ENCODE measurements at regions of chr6 and their contacts with region 1.

Region 1: DNA sequence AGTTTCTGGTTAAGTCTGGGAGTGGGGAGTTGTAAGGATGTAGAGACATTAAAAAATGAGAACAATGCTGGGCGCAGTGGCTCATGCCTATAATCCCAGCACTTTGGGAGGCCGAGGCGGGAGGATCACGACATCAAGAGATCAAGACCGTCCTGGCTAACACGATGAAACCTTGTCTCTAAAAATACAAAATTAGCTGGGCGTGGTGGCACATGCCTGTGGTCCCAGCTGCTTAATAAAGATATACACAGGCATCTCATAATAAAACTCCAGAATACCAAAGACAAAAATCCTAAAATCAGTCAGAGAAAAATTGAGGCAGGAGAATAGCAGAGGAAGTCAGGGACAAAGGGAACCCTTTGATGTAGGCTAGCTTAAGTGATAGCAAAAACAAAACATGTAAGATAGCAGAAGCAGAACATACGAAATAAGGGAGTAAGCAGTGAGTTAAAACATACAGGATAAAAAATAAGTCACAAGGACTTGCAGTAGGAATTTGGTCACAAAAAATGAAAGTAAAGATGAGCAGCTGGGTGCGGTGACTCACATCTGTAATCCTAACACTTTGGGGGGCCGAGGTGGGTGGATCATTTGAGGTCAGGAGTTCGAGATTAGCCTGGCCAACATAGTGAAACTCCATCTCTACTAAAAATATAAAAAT is 23.6 kb downstream of the DDX43 start:
- DNase-seq: no peak
- ATAC-seq: no peak
- H3K4me3 ChIP-seq: no peak overlapping the region
- H3K4me3 Mint-ChIP-seq: peak overlapping the region; percentile 43
- H3K27ac ChIP-seq: no peak overlapping the region
- H3K27ac Mint-ChIP-seq: peak overlapping the region; percentile 72 to 82
- H3K4me1 ChIP-seq: peaks cover 20% of the 10 kb centered on the region
- H3K4me1 Mint-ChIP-seq: peaks cover 24% of the 10 kb centered on the region in 2 donors
- H3K27me3 ChIP-seq: no peaks in the 10 kb centered on the region
- H3K27me3 Mint-ChIP-seq: no peaks in the 10 kb centered on the region
- CTCF ChIP-seq: no peak

Region 2: DNA sequence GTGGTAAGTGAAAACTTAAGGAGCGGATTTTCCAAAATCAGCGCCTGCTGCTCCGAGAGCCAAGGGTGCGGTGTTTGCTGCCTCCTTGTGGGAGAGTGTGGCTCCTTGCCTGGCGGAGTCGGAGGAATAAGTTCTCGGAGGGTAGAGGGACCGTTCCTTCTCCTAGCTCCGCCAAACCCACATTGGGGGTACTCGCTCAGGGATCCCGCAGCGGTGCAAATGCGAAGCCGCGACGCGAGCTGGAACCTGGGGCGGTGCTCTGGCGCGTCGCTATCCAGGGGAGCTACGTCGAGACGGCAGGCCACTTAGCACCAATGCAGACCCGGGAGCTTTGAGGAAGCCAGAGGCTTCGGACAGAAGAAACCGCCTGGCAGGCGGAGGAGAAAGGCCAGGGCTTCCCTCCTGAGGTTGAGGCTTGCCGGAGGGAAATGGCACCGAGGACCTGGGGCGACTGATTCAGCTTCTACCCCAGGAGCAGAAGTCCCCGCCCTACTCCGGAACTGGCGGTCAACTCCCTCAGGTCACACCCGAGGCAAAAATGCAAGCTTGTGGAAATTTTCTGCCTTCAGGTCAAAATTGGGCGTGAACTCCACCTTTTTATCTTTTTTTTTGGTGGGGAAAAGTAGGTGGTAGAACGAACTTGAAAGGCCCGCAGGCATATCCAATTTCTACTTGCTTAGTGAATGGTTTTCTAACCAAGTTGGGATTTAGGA is 29.3 kb before region 1 on chr6:
- intact Hi-C with region 1: loop called (anchors 5 kb)
- DNase-seq: peak; percentile 44 to 70
- ATAC-seq: peak; percentile 81 to 92 (median 87)
- H3K4me3 ChIP-seq: peak overlapping the region; percentile 88
- H3K4me3 Mint-ChIP-seq: peak overlapping the region; percentile 89
- H3K27ac ChIP-seq: peak overlapping the region; percentile 74
- H3K27ac Mint-ChIP-seq: peak overlapping the region; percentile 80 to 90
- H3K4me1 ChIP-seq: peaks cover 18% of the 10 kb centered on the region
- H3K4me1 Mint-ChIP-seq: peaks cover 12 to 22% of the 10 kb centered on the region in 2 donors
- H3K27me3 ChIP-seq: no peaks in the 10 kb centered on the region
- H3K27me3 Mint-ChIP-seq: no peaks in the 10 kb centered on the region
- CTCF ChIP-seq: peak; percentile 35

Region 3: GRCh38 chr6:73451223-73452107 is 33.3 kb after region 1 on chr6:
- intact Hi-C with region 1: loop called (anchors 2 kb)
- DNase-seq: peak; percentile 41 to 69
- ATAC-seq: peak; percentile 51 to 64 (median 62)
- H3K4me3 ChIP-seq: peak overlapping the region; percentile 63
- H3K4me3 Mint-ChIP-seq: peak overlapping the region; percentile 91
- H3K27ac ChIP-seq: peak overlapping the region; percentile 68
- H3K27ac Mint-ChIP-seq: peak overlapping the region; percentile 11 to 83
- H3K4me1 ChIP-seq: peaks cover 30% of the 10 kb centered on the region
- H3K4me1 Mint-ChIP-seq: peaks cover 21 to 27% of the 10 kb centered on the region in 2 donors
- H3K27me3 ChIP-seq: no peaks in the 10 kb centered on the region
- H3K27me3 Mint-ChIP-seq: no peaks in the 10 kb centered on the region
- CTCF ChIP-seq: no peak

Region 4: GRCh38 chr6:73461537-73462350 is 43.5 kb after region 1 on chr6 and contains the start of gene MTO1:
- intact Hi-C with region 1: loop called (anchors 1 kb)
- DNase-seq: peak; percentile 79 to 94
- ATAC-seq: peak; percentile 91 to 96 (median 92)
- H3K4me3 ChIP-seq: peak within 1 kb of the TSS; percentile 86
- H3K4me3 Mint-ChIP-seq: peak within 1 kb of the TSS; percentile 98
- H3K27ac ChIP-seq: peak within 1 kb of the TSS; percentile 93
- H3K27ac Mint-ChIP-seq: peak within 1 kb of the TSS; percentile 98 to 99
- H3K4me1 ChIP-seq: peaks cover 21% of the 10 kb centered on the region
- H3K4me1 Mint-ChIP-seq: peaks cover 25 to 26% of the 10 kb centered on the region in 2 donors
- H3K27me3 ChIP-seq: no peaks in the 10 kb centered on the region
- H3K27me3 Mint-ChIP-seq: no peaks in the 10 kb centered on the region
- CTCF ChIP-seq: no peak
- total RNA-seq, gene MTO1: 37.8 to 46.1 (median 41.3) TPM

Region 5: DNA sequence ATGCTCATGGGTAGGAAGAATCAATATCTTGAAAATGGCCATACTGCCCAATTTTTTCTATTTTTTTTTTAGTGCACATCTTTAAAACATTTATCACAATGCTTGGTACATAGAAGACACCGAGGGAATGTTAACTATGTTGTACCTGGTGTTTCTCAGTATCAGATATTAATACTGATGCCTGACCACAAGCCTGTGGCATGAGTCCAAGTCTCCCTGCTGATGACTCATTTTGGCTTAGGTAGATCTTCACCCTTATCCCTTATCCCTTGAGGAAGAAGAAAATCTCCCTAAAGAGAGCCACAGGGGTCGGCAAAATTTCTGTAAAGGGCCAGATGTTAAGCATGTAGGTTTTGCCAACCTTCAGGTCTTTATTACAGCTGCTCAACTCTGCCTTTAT is 292.3 kb after region 1 on chr6:
- intact Hi-C with region 1: no loop called
- DNase-seq: no peak
- ATAC-seq: no peak
- H3K4me3 ChIP-seq: no peak overlapping the region
- H3K4me3 Mint-ChIP-seq: no peak overlapping the region
- H3K27ac ChIP-seq: no peak overlapping the region
- H3K27ac Mint-ChIP-seq: no peak overlapping the region
- H3K4me1 ChIP-seq: peaks cover 2% of the 10 kb centered on the region
- H3K4me1 Mint-ChIP-seq: no peaks in the 10 kb centered on the region
- H3K27me3 ChIP-seq: no peaks in the 10 kb centered on the region
- H3K27me3 Mint-ChIP-seq: no peaks in the 10 kb centered on the region
- CTCF ChIP-seq: no peak